Activated CD4-positive, alpha-beta T cell treated with anti-CD3 and anti-CD28 coated beads, Interleukin-2, amount 10 ng/mL, durations not matched to agents 24 days and 14 days (primary cell): ENCODE measurements at regions of chr1 and their contacts with region 1.

Region 1: DNA sequence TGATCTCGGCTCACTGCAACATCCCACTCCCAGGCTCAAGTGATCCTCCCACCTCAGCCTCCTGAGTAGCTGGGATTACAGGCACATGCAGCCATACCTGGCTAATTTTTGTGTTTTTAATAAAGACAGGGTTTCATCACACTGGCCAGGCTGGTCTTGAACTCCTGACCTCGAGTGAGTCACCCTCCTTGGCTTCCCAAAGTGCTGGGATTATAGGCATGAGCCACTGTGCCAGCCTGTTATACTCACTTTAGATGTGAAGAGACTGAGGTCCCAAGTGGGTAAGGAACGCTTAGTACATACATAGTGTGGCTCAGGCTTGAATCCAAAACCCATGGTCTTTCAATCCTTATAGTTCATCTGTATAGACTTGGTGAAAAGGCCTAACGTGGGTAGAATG is 63.7 kb upstream of the EPS8L3 start:
- DNase-seq: no peak
- H3K4me3 Mint-ChIP-seq: no peak overlapping the region
- H3K27ac Mint-ChIP-seq: no peak overlapping the region
- H3K4me1 Mint-ChIP-seq: peaks cover 20% of the 10 kb centered on the region
- H3K27me3 Mint-ChIP-seq: no peaks in the 10 kb centered on the region

Region 2: DNA sequence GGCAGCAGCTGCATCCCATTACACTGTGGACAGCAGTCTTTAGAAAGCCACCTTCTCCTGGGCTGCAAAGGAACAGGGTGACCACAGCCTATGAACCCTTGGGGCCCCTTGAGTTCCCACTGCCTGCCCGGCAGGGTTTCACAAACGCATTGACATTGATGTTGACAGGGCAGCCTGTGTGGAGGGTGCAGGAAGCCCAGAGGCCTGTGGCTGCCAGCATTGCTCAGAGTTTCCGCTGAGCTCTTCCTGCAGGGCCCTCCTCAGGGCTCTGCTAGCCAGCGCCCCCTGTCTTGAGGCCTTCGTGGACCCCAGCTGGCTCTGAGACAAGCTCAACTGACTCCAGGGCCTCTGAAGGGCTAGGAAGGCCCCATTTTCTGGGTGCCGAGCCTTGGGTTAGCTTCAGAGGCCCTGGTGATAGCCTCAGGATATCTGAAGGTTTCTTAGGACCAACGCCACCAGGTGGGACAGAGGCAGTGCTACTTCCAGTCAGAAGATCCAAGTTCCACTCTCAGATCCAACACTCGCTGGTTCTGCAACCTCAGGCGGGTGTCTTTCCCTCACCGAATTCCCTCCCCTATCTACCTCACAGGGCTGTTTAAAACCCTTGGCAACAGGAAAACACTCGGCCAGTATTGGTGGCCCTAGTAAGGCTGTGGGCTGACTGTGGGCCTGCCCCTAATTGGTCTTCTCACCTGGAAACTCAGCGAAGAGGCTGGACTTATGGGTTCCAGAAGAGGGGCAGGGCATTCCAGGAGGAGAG is 36.6 kb before region 1 on chr1:
- intact Hi-C with region 1: loop called (anchors 5 kb)
- DNase-seq: peak; percentile 94
- H3K4me3 Mint-ChIP-seq: peak overlapping the region; percentile 53
- H3K27ac Mint-ChIP-seq: peak overlapping the region; percentile 95
- H3K4me1 Mint-ChIP-seq: peaks cover 66% of the 10 kb centered on the region
- H3K27me3 Mint-ChIP-seq: no peaks in the 10 kb centered on the region

Region 3: DNA sequence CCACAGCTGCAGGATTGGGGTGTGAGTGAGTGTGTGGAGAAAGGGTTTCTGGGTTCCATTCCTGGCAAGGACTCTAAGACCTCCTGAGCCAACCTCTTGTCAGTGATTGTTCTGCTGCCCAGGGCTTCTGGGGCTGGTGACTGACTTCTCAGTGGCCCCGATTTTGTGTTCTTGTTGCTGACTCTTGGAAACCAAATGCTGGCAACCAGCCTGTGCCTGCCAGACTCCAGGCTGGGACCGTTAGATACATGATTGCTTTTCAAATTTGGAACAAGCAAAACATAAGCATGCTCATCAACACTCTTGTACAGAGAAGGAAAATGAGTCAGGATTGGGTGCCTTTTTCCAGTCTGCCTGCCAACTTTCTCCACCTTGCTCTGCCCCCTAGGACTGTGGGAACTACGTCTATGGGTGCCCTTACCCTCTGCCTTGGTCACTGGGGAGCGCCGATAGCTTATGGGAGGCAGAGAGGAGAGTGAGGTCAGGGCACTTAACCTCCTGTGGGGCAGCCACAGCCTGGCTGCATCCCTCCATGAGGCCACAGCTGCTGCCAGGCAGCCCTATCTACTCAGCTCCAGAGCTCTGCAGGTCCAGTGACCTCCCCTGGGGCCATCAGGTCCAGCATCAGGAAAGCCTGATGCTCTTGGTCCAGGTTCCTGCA is 24.4 kb before region 1 on chr1:
- intact Hi-C with region 1: loop called (anchors 1 kb)
- DNase-seq: no peak
- H3K4me3 Mint-ChIP-seq: peak overlapping the region; percentile 75
- H3K27ac Mint-ChIP-seq: peak overlapping the region; percentile 98
- H3K4me1 Mint-ChIP-seq: peaks cover 76% of the 10 kb centered on the region
- H3K27me3 Mint-ChIP-seq: no peaks in the 10 kb centered on the region

Region 4: GRCh38 chr1:109864047-109864822 is 36.8 kb after region 1 on chr1:
- intact Hi-C with region 1: no loop called
- DNase-seq: peak; percentile 70
- H3K4me3 Mint-ChIP-seq: no peak overlapping the region
- H3K27ac Mint-ChIP-seq: no peak overlapping the region
- H3K4me1 Mint-ChIP-seq: peaks cover 8% of the 10 kb centered on the region
- H3K27me3 Mint-ChIP-seq: peaks cover 12% of the 10 kb centered on the region

Region 5: GRCh38 chr1:109890115-109890953 is 62.9 kb after region 1 on chr1:
- intact Hi-C with region 1: loop called (anchors 1 kb)
- DNase-seq: no peak
- H3K4me3 Mint-ChIP-seq: peak overlapping the region; percentile 18
- H3K27ac Mint-ChIP-seq: peak overlapping the region; percentile 90
- H3K4me1 Mint-ChIP-seq: peaks cover 36% of the 10 kb centered on the region
- H3K27me3 Mint-ChIP-seq: no peaks in the 10 kb centered on the region

Region 6: DNA sequence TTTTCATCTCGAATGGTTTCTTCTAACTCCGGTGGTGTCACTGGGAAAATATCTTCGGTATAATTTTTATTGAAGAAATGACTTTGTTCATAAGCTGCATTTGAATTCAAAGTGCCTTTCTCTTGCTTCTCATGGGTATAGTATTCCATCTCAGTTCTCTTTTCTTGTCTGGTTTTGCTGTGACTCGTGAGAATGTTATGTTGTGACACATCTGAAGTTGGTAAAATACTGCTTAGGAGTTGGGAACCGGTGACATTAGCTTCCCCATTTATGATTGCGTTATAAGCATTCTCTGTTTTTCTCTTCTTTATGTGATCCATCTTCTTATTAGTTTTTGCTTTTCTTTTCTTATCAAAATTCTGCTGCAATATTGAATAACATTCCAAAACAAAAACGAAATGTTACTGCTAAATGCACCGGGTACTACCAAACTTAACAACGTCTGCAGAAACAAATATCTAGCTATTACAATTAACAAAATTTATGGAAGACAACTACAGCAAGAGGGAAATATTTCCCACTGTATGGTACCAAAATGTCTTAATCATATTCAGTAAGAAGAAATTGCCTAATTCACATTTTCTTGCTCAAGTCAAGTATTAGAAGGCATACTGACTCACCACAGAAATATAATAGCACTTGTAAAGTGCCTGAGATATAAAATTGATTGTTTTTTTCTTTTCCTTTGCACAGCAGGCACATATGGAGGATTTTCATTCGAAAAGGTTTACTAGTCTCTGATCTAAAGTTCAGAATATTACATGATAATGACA is 1120.8 kb after region 1 on chr1:
- intact Hi-C with region 1: no loop called
- DNase-seq: no peak
- H3K4me3 Mint-ChIP-seq: no peak overlapping the region
- H3K27ac Mint-ChIP-seq: no peak overlapping the region
- H3K4me1 Mint-ChIP-seq: peaks cover 10% of the 10 kb centered on the region
- H3K27me3 Mint-ChIP-seq: no peaks in the 10 kb centered on the region